ENCODE measurements at regions of chr1 and their contacts with region 1.

Region 1: GRCh38 chr1:226662642-226663326 is 76.3 kb downstream of the ITPKB start:
- DNase-seq: peak; percentile 92
- H3K4me3 Mint-ChIP-seq: peak overlapping the region; percentile 69
- H3K27ac Mint-ChIP-seq: peak overlapping the region; percentile 81
- H3K4me1 Mint-ChIP-seq: peaks cover 79% of the 10 kb centered on the region
- H3K27me3 Mint-ChIP-seq: no peaks in the 10 kb centered on the region

Region 2: DNA sequence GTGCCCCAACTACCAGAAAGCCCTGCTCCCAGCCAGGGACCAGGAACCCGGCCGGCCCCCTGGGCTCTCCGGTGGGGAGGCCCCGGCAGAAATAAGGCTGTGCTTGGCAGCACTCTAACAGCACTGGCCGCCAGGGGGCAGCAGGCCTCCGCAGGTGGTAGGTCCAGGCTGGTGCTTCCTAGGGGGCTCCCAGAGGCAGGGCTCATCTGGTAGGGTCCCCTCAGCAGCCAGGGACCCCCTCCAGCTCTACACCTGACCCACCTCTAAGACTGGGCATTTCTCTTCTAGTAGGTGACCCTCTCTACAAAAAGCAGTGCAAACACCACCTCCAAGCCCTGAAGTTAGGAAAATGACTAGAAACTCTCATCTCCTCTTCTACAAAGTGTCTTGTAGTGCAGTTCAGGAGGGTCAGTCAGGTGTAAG is 28.6 kb before region 1 on chr1:
- intact Hi-C with region 1: loop called (anchors 1 kb)
- DNase-seq: peak; percentile 93
- H3K4me3 Mint-ChIP-seq: peak overlapping the region; percentile 33
- H3K27ac Mint-ChIP-seq: peak overlapping the region; percentile 5
- H3K4me1 Mint-ChIP-seq: peaks cover 40% of the 10 kb centered on the region
- H3K27me3 Mint-ChIP-seq: no peaks in the 10 kb centered on the region

Region 3: DNA sequence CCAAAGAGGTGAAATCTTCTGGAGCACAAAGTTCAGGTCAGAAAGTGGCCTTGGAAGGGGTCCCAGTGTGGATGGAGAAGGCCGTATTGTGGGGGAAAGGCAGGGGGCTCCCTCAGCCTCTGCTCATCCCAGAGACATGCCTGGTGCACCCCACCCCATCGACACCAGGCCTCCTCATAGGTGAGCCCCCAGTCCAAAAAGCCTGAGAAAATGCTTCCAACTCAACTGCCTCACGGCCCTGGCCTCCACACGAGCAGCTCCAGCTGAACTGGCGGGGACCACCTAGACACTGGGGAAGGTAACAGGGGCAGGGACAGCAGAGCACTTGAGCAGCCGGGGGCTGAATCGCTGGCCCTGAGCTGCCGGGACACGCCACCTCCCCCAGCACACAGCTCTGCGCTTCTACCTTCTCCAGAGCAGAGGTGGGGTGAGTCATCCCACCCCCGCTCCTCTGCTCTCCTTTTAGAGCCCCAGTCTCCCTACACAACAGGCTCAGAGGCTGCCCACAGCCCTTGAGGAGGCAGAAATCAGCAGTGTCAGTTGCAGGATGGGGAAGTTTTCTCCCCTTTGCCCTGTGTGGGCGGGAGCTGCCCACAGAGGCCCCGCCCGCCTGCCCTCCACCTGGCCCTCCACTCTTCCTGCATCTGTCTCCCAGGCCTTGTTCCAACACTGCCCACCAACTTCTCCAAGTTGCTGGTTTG is 19.8 kb before region 1 on chr1:
- intact Hi-C with region 1: loop called (anchors 1 kb)
- DNase-seq: peak; percentile 80
- H3K4me3 Mint-ChIP-seq: peak overlapping the region; percentile 79
- H3K27ac Mint-ChIP-seq: peak overlapping the region; percentile 91
- H3K4me1 Mint-ChIP-seq: peaks cover 40% of the 10 kb centered on the region
- H3K27me3 Mint-ChIP-seq: no peaks in the 10 kb centered on the region

Region 4: DNA sequence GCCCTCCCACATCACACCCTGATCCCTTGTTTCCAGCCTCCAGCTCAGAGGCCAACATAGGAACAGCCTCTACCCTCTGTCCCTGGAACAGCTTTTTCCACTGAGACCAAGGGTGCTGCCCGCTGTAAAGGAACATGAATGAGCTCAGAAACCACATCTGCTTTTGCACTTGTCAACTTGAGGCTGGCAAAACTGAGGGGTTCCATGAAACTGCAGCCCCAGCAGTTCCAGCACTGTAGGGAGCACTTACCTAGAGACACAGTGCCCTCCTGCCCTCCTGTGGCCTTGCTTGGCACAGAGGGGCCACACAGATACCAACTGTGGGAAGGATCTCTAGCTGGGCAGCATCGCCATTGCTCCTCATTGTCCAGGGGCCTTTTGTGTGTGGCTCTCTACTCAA is 24.6 kb after region 1 on chr1:
- intact Hi-C with region 1: loop called (anchors 1 kb)
- DNase-seq: no peak
- H3K4me3 Mint-ChIP-seq: peak overlapping the region; percentile 23
- H3K27ac Mint-ChIP-seq: peak overlapping the region; percentile 83
- H3K4me1 Mint-ChIP-seq: peaks cover 89% of the 10 kb centered on the region
- H3K27me3 Mint-ChIP-seq: no peaks in the 10 kb centered on the region

Region 5: DNA sequence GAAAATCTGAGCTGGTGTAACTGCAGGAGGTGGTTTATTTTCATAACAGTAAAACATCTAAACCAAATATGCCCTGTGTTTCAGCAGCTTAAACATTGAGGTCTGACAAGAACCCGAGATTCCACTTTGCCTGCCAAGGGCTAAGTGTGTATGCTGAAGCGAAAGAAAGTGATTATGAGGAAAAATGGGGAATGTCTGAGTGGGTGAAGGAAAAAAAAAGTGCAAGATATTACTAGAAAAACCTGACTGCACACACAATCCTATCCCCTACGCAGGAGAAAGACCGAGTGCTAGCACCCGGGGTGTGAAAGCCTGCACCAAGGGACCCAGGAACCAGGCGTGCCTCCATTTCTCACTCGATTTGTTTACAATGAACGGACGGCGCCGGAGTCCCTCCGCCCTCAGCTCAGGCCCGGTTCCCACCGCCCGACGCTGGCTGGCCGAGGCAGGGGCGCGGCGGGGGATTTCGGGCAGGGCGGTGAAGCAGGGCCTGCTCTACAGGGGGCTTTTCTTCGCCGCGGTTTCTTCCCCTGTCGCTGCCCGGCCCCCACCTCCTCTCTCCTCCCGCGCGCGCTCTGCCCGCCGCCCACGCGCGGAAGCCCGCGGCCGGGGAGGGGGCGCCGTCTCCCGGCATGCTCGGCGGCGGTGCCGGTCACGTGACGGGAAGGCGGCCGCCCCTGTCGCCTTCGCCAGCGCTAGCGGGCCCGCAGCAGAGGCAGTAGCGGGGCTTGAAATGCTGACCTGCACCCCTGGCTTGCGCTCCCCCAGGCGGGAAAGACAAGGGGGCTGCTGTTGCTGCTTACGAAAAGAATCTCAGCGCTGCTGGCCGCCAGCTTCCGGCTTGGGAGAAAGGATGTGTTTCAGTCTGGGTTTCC is 40.4 kb after region 1 on chr1:
- intact Hi-C with region 1: loop called (anchors 1 kb)
- DNase-seq: peak; percentile 96
- H3K4me3 Mint-ChIP-seq: peak overlapping the region; percentile 86
- H3K27ac Mint-ChIP-seq: peak overlapping the region; percentile 92
- H3K4me1 Mint-ChIP-seq: peaks cover 48% of the 10 kb centered on the region
- H3K27me3 Mint-ChIP-seq: no peaks in the 10 kb centered on the region

Region 6: GRCh38 chr1:226731257-226731893 is 68.6 kb after region 1 on chr1:
- intact Hi-C with region 1: loop called (anchors 2 kb)
- DNase-seq: peak; percentile 66
- H3K4me3 Mint-ChIP-seq: peak overlapping the region; percentile 84
- H3K27ac Mint-ChIP-seq: peak overlapping the region; percentile 90
- H3K4me1 Mint-ChIP-seq: peaks cover 83% of the 10 kb centered on the region
- H3K27me3 Mint-ChIP-seq: no peaks in the 10 kb centered on the region

Region 7: DNA sequence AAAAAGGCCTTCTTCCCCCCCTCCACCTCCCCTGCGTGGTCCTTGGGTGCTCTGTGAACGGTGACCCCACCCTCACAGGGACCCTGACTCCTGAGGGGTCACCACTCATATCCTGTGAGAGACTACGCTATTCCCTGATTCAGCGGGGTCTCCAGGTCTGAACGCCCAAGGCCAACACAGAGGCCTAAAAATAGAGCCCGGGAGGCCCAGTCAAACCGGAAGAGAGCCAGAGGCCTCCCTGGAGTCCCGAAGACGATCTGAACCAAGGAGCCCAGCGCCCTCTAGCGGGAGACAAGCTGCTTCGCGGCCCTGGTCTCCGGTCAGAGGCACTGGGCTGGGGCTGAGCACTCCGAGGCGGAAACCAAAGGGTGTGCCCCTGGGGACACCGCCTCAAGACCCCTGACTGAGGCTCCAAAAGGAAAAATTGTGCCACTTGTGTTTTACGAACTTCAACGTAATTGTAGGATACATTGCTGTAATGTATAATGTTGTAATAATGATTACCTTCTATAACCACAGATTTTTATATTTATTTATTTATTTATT is 165.3 kb after region 1 on chr1:
- intact Hi-C with region 1: no loop called
- DNase-seq: peak; percentile 98
- H3K4me3 Mint-ChIP-seq: peak overlapping the region; percentile 63
- H3K27ac Mint-ChIP-seq: peak overlapping the region; percentile 92
- H3K4me1 Mint-ChIP-seq: peaks cover 20% of the 10 kb centered on the region
- H3K27me3 Mint-ChIP-seq: no peaks in the 10 kb centered on the region

Region 8: DNA sequence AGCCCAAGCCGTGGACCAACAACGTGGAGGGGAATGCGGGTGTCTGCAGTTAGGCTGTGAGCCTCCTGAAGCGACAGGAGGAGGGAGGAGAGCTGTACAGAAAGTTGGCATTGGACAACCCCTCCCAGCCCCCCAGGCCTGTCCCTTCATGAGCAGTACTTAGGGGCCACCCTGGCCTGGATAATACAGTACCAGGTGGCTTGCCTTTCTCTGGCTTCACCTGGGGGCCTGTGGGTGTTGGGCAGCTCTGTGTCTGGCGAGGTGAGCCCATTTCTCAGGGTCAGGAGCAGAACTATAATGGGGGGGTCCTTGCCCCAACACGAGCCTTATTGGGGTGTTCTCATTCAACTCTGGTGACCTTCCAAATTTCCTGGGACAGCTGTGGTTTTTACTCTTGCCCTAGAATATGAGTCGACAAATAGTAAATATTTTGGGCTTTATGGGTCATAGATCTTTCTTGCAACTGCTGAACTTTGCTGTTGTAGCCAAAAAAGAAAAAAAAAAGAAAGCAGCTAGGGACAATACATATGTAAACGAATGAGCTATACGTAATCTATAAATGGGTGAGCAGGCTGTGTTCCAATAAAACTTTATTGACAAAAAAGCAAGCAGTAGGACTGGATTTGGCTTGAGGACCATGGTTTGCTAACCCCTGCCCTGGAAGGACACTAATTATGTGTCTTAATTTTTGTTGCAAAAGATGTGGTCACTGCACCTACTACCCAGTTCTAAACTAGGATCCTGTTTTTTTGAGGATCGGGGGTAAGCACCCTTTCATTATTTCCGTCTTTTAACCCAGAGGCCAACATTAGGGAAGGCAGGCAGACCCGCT is 288.7 kb after region 1 on chr1:
- intact Hi-C with region 1: no loop called
- DNase-seq: peak; percentile 47
- H3K4me3 Mint-ChIP-seq: no peak overlapping the region
- H3K27ac Mint-ChIP-seq: no peak overlapping the region
- H3K4me1 Mint-ChIP-seq: peaks cover 11% of the 10 kb centered on the region
- H3K27me3 Mint-ChIP-seq: no peaks in the 10 kb centered on the region